Activated CD4-positive, alpha-beta T cell treated with anti-CD3 and anti-CD28 coated beads for 36 hours (primary cell): ENCODE measurements at regions of chr11 and their contacts with region 1.

Region 1: DNA sequence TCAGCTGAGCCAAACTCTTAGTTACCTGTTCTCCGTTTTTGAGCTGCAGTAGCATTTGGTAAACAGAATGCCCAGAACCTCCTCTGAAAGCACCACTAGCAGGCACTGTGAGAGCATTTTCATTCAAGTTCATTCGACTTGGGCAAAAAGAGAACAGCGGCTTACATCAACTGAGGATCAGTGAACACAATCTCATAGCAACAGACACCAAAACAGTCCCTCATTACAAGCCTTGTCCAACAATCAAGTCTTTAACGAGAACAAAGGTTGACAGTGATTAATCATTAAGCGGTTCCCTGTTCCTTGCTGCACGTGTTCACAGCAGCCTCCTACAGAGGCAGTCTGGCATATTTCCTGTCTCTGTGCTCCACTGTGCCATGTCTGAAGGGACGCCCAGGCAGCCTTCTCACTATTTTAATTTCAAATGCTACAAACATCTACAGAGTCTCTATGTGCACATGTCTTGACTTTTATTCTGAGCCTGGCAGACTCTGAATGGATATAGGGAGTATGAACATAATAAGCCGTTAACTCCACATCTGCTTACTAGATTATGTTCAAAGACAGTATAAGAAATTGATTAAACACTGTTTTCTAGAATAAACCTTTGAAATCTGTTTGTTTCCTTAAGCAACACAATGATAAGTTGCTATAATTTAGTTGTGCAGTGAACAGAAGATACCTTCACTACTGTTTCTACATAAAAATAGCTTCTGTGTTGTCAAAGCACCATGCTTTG is 88.3 kb upstream of the MTMR2 start:
- DNase-seq: peak; percentile 66
- ATAC-seq: peak; percentile 71
- H3K4me3 Mint-ChIP-seq: peak overlapping the region; percentile 53
- H3K27ac Mint-ChIP-seq: peak overlapping the region; percentile 85
- H3K4me1 Mint-ChIP-seq: peaks cover 63% of the 10 kb centered on the region
- H3K27me3 Mint-ChIP-seq: no peaks in the 10 kb centered on the region

Region 2: DNA sequence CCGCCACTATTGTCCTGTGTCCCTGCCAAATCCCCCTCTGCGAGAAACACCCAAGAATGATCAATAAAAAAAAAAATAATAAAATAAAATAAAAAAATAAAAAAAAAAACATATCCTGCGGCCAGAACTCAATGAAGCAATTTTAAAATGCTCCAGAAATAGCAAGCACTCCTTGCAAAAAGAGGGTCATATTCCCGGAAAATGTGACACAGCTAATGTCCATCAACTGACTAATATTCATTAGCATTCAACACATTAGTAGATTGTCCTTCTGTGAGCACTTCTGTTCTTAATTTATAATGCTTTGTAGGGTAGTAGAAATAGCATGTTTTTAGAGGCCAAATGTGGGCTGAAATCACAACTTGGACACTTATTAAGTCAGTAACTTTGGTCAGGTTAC is 528.9 kb before region 1 on chr11:
- CTCF ChIA-PET with region 1: no interaction called
- POLR2A ChIA-PET with region 1: no interaction called
- intact Hi-C with region 1: no loop called
- DNase-seq: no peak
- ATAC-seq: no peak
- H3K4me3 Mint-ChIP-seq: no peak overlapping the region
- H3K27ac Mint-ChIP-seq: no peak overlapping the region
- H3K4me1 Mint-ChIP-seq: peaks cover 2% of the 10 kb centered on the region
- H3K27me3 Mint-ChIP-seq: no peaks in the 10 kb centered on the region

Region 3: GRCh38 chr11:95923728-95924413 is 88.4 kb before region 1 on chr11 and contains the start of gene MTMR2:
- CTCF ChIA-PET with region 1: no interaction called
- POLR2A ChIA-PET with region 1: no interaction called
- intact Hi-C with region 1: loop called in 1 of 2 experiments (anchors 5 kb)
- DNase-seq: peak; percentile 75
- ATAC-seq: peak; percentile 93
- H3K4me3 Mint-ChIP-seq: peak within 1 kb of the TSS; percentile 99
- H3K27ac Mint-ChIP-seq: peak within 1 kb of the TSS; percentile 99
- H3K4me1 Mint-ChIP-seq: peaks cover 25% of the 10 kb centered on the region
- H3K27me3 Mint-ChIP-seq: no peaks in the 10 kb centered on the region
- total RNA-seq, gene MTMR2: 32.8 to 36.5 TPM

Region 4: GRCh38 chr11:95961758-95962157 is 50.5 kb before region 1 on chr11:
- CTCF ChIA-PET with region 1: no interaction called
- POLR2A ChIA-PET with region 1: no interaction called
- intact Hi-C with region 1: no loop called
- DNase-seq: no peak
- ATAC-seq: no peak
- H3K4me3 Mint-ChIP-seq: no peak overlapping the region
- H3K27ac Mint-ChIP-seq: no peak overlapping the region
- H3K4me1 Mint-ChIP-seq: no peaks in the 10 kb centered on the region
- H3K27me3 Mint-ChIP-seq: no peaks in the 10 kb centered on the region

Region 5: DNA sequence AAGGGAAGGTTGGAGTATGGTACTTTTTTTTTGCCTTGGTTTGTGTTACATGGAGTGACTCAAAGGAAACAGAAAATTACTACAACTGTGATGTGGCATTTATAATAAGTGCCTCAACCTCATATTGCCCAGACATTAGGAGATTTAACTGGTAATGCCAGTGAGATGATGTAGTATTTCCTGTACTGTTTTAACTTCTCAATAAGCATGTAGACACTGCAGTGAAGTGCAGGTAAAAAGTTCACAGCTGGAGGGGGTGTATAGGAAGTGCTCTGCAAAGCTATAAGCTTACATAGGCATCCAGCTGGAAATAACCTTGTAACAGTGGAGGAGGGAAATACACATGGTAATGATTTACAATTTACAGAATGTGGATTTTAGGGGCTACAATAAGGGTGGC is 49.9 kb after region 1 on chr11:
- CTCF ChIA-PET with region 1: interaction called, 5 read pairs
- POLR2A ChIA-PET with region 1: interaction called, 3 read pairs
- intact Hi-C with region 1: loop called (anchors 1 to 2 kb)
- DNase-seq: peak; percentile 65
- ATAC-seq: peak; percentile 87
- H3K4me3 Mint-ChIP-seq: peak overlapping the region; percentile 42
- H3K27ac Mint-ChIP-seq: peak overlapping the region; percentile 94
- H3K4me1 Mint-ChIP-seq: peaks cover 81% of the 10 kb centered on the region
- H3K27me3 Mint-ChIP-seq: no peaks in the 10 kb centered on the region

Region 6: GRCh38 chr11:96155627-96156378 is 143.5 kb after region 1 on chr11:
- CTCF ChIA-PET with region 1: no interaction called
- POLR2A ChIA-PET with region 1: no interaction called
- intact Hi-C with region 1: loop called in 1 of 2 experiments (anchors 1 kb)
- DNase-seq: peak; percentile 85
- ATAC-seq: peak; percentile 62
- H3K4me3 Mint-ChIP-seq: peak overlapping the region; percentile 48
- H3K27ac Mint-ChIP-seq: peak overlapping the region; percentile 98
- H3K4me1 Mint-ChIP-seq: peaks cover 60% of the 10 kb centered on the region
- H3K27me3 Mint-ChIP-seq: no peaks in the 10 kb centered on the region

Region 7: DNA sequence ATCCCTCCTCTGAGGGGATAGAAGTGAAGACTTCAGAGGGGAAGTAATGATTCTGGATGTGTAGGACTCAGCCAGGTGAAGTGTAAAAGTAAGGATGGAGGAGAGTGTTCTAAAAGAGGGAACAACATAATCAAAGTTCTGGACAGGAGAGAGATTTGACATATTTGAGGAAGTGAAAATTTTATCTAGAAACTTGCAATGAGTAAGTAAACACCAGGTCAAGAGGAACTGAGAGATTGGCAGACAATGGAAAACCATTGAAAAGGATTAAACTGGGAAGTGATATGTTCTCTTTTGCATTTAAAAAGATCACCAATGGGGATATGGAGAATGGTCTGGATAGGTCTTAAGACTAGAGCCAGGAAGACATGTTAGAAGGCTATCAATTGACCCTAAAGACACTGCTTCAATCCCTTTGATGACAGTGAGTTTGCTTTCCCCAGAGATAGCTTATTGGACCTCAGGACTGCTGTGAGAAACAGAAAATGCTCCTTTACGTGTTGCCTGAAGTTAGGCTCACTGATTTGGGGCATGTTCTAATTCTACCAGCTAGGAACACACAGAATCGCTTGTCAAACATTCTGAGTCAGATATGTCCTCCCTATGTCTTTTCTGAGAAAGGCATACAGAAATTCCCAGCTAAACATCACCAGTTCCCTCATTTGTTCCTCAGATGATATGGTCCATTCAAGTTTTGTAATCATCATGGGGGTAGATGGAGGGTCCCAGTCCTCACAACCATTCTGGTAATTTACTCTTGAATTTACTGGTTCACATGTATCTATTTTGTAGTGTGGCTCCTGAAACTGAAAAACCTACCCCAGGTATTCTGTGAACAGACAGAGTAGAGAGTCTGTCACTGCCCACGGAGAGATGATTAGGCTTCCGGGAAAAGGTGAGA is 185.8 kb after region 1 on chr11:
- CTCF ChIA-PET with region 1: interaction called, 6 read pairs
- POLR2A ChIA-PET with region 1: no interaction called
- intact Hi-C with region 1: loop called in 1 of 2 experiments (anchors 1 kb)
- DNase-seq: no peak
- ATAC-seq: peak; percentile 50
- H3K4me3 Mint-ChIP-seq: peak overlapping the region; percentile 16
- H3K27ac Mint-ChIP-seq: peak overlapping the region; percentile 91
- H3K4me1 Mint-ChIP-seq: peaks cover 90% of the 10 kb centered on the region
- H3K27me3 Mint-ChIP-seq: no peaks in the 10 kb centered on the region

Region 8: DNA sequence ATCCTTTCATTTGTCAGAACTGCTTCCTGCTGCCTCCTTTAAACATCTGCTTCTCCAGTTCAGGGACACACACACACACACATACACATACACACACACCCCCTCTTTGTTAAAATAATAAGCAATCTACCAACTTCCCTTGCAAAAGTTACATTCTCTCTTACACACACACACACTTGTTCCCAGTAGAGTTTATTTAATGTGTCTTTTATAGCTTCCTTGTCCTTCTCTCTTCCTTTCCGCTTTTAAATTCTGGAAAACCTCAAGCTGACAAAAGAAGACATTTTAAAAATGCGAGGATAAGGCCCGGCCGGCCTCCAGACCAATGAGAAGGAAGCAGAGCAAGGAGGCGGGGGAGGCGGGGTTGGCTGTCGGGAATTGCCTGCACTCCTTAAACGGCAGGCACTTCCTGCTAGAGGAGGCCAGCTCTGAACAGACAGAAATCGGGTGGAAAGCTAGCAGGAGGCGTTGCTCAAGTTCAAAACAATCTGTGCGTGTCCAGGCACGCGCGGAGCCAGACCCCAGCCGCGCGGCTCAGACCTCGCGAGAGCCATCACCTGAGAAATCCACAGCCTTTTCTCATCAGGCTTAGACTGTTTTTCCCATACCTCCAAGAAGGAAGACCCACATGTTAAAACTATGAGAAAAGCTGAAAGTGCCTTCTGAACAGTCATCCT is 230.9 kb after region 1 on chr11:
- CTCF ChIA-PET with region 1: interaction called, 4 read pairs
- POLR2A ChIA-PET with region 1: no interaction called
- intact Hi-C with region 1: loop called (anchors 2 to 5 kb)
- DNase-seq: peak; percentile 92
- ATAC-seq: peak; percentile 82
- H3K4me3 Mint-ChIP-seq: peak overlapping the region; percentile 73
- H3K27ac Mint-ChIP-seq: peak overlapping the region; percentile 94
- H3K4me1 Mint-ChIP-seq: peaks cover 62% of the 10 kb centered on the region
- H3K27me3 Mint-ChIP-seq: no peaks in the 10 kb centered on the region